HEK293 (cell line): ENCODE measurements at regions of chr17 and their contacts with region 1.

Region 1: DNA sequence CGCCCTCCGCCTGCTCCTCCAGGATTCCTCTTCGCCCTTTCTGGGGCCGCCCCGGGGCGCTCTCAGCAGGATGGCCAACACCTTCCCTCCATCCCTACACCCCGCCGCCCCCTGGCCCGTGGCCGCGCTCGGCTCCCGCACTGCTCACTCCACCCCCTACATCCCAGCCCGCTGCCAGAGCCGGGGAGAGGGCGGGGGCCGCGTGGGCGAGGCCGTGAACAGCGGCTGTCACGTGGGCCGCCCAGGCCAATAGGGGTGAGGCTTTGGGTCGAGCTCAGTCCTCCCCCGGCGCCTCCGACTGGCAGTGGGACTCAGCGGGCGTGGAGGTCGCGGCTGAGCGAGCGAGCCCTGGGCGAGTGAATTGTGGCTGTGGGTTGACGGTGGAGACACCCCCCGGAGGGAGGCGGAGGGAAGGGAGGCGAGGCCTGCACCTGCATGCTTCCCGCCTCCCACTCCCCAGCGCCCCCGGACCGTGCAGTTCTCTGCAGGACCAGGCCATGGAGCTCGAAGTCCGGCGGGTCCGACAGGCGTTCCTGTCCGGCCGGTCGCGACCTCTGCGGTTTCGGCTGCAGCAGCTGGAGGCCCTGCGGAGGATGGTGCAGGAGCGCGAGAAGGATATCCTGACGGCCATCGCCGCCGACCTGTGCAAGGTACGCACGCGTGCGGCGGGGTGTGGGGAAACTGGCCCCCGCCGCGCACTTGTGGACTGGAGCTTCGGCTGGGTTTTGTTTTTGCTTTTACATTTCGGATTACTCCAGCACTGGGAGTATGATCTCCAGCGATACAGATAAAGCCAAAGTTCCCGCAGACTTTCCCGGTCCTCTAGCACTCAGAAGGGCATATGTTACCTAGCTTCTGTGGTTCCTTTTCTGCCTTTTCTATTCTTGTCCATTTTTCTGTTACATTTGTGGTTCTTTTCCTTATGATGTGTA is at the start of gene ALDH3A2:
- H3K4me3 ChIP-seq: peak within 1 kb of the TSS; percentile 86
- H3K27ac ChIP-seq: peak within 1 kb of the TSS; percentile 74
- H3K4me1 ChIP-seq: peaks cover 21% of the 10 kb centered on the region
- CTCF ChIP-seq: peak; percentile 77

Region 2: DNA sequence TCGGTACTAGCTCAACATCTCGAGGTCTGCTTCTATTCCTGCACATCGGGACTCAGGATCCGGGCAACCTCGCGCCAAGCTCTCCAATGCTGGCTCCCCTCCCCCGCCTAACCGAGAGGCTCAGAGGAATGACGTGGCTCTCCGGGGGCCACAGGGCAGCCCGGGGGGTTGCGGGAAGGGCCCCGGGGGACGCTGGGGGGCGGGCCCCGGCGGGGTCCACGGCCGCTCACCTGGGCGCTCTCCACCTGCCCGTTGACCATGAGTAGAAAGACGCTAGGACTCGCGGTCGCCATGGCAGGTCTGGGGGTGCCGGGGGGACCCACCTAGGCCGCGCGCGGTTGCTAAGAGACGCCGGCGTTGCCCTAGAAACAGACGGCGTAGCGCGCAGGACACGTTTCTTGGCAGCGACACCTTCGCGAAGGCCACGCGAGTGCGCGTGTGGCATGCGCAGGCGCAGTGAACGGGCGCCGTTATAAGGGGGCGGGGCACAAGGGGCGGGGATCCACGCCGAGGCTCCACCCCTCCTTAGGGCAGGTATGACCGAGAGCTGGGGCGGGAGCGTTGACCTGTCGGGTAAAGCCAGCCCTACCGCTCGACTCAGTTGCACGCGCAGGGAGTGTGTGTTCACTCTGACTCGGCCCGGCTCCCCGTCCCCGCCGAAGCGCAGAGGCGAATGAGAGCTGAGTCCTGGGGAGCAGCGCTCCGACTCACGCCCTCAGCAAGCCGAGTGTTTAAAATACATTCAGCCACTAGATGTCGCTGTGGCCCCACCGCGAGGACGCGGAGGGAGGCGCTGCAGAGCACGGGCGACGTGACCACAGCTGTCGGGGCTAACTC is 286.2 kb before region 1 on chr17 and contains the start of gene B9D1:
- CTCF ChIA-PET with region 1: interaction called, 14 read pairs
- POLR2A ChIA-PET with region 1: no interaction called
- H3K4me3 ChIP-seq: peak within 1 kb of the TSS; percentile 81
- H3K27ac ChIP-seq: peak within 1 kb of the TSS; percentile 47
- H3K4me1 ChIP-seq: peaks cover 5% of the 10 kb centered on the region
- CTCF ChIP-seq: peak; percentile 100

Region 3: GRCh38 chr17:19513897-19514488 is 134.7 kb before region 1 on chr17:
- CTCF ChIA-PET with region 1: interaction called, 11 read pairs
- POLR2A ChIA-PET with region 1: interaction called, 8 read pairs
- H3K4me3 ChIP-seq: no peak overlapping the region
- H3K27ac ChIP-seq: no peak overlapping the region
- H3K4me1 ChIP-seq: no peaks in the 10 kb centered on the region
- CTCF ChIP-seq: peak; percentile 82

Region 4: DNA sequence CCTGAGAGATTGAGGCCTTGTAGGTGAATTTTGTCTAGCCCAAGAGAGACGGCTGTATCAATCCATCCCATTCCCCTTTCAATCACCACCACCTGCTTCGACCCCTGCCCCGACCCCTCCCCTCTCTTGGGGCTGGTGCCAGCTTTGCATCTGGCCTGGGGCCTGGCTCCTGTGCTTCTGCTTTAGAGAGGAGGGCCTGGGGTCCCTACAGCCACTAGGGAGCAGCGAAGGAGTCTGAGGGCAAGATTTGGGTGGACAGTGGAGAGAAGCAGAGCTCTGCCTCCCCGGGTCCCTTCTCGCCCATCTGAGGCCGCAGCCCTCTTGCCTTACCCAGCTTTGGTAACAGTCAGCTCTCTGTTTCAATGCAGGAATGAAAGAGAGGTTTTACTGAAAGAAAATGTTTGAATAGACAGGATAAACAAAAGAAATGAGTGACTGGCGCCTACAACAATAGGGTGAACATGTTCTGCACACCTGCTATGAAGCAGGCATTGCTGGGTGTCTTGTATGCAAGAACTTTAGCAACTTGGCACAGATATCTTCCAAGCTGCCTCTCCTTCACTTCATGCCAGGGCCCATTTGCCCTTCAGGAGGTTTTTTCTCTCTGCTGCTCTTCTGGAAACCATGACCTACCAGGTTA is 57.7 kb before region 1 on chr17:
- CTCF ChIA-PET with region 1: no interaction called
- POLR2A ChIA-PET with region 1: no interaction called
- H3K4me3 ChIP-seq: no peak overlapping the region
- H3K27ac ChIP-seq: no peak overlapping the region
- H3K4me1 ChIP-seq: no peaks in the 10 kb centered on the region
- CTCF ChIP-seq: no peak

Region 5: DNA sequence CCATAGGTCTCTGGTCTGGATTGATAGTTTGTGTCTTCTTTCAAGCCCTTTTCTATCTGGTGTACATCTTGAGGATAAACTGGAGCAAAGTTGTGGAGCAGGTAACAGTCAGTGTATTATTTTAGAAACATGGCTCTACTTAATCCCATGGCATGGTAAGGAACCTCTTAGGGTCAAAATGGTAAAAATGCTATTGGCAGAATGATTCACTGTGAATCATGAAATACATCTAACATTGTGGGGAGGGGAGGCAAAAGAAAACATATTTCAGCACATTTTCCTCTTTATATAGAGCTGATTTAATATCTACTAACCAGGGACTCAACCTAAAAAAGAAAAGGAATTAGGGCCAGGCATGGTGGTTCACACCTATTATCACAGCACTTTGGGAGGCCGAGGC is 18.1 kb before region 1 on chr17:
- CTCF ChIA-PET with region 1: interaction called, 27 read pairs
- POLR2A ChIA-PET with region 1: interaction called, 15 read pairs
- H3K4me3 ChIP-seq: no peak overlapping the region
- H3K27ac ChIP-seq: no peak overlapping the region
- H3K4me1 ChIP-seq: no peaks in the 10 kb centered on the region
- CTCF ChIP-seq: no peak

Region 6: DNA sequence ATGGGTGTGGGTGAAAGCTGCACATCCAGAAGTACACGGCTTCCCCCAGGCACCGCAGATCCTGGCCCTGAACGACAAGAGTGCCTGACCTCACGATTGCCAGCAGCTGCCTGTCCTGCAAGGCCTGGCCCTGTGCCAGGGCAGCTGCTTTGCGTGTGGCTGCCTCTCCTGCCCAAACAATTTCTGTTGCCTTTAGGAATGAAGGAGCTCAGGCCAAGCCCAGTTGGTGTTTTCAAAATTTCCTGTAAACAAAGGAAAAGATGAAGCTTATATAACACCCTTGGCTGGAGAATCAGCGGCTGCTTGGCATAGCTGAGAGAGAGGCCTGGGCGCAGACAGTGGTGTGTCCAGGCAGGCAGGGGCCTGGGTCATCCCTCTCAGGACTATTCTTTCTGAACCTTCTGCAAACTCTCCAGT is 79.3 kb after region 1 on chr17:
- CTCF ChIA-PET with region 1: no interaction called
- POLR2A ChIA-PET with region 1: interaction called, 25 read pairs
- H3K4me3 ChIP-seq: no peak overlapping the region
- H3K27ac ChIP-seq: no peak overlapping the region
- H3K4me1 ChIP-seq: 0 out of 2 replicates have a peak, but pooled peaks cover 2% of the 10 kb centered on the region
- CTCF ChIP-seq: no peak

Region 7: DNA sequence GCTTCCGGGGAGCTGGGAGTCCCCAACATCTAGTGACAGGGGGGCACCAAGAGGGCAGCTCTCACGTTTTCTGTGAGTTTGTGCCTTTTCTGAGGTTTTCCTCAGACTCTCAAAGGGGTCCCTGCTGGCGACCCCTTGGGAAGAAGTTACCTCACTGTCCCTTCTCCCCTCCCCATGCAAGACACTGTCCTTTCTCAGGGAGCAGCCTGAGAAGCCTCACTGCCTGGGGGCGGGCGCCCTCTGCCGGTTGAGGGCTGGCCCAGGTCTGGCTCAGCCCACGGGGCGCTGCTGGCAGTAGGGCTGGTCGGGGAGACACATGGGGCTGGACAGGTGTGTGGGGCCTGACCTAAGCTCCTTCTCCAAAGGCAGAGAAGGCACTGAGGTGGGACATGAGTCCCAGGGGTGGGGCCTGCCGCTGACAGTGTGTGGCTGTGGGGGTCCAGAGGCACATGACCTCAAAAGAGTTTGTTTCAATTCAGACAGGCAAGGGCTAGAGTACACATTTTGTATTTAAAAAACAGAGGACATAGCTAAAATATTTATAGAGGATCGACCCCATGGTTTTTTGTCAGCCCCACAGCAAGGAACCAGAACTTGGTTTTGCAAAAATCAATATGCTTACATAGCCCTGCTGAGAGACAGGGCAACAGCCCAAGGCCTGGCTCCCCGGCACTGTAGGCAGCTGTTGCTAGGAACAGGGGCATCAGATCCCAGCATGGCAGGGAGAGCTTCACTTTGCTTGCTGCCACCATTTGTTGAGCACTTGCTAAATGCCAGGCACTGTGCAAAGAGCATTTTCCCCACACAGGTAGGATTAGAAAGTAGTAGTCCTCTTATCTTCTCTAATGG is 117.9 kb after region 1 on chr17:
- CTCF ChIA-PET with region 1: interaction called, 35 read pairs
- POLR2A ChIA-PET with region 1: interaction called, 9 read pairs
- H3K4me3 ChIP-seq: no peak overlapping the region
- H3K27ac ChIP-seq: no peak overlapping the region
- H3K4me1 ChIP-seq: no peaks in the 10 kb centered on the region
- CTCF ChIP-seq: peak; percentile 92